ENCODE measurements at regions of chr11 and their contacts with region 1.

Region 1: DNA sequence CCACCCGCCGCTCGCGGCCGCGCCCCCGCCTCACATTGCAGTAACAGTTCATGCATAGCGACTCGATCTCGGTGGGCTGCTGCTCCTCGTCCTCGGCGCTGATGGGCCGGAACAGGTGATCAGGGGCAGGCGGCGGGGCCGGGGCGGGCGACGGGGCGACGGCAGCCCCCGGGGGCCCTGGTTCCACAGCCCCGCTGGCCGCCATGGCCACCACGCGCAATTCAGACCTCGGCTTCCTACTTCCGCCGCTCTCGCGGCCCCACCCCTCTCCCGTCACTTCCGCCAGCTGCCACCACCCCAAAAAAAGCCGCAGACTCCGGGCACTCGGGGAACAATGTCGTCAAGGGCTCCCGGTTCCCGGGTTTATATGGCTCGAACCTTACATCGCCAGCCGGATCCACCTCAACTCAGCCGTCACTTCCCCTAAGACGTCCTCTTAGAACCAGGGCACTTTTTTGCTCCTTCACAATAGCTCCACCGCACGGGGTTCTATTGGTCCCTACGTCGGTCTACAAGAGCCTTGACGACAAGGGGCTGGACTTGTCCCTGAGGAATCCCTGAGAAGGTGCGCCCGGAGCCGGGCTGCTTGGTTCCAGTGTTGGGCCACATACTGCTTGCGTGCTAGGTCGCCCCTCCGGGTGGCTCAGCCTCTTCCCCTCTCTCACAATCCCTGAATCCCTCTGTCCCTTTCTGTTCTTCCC is at the start of gene ZPR1:
- DNase-seq: no peak
- H3K4me3 ChIP-seq: peak within 1 kb of the TSS; percentile 77
- CTCF ChIP-seq: no peak

Region 2: GRCh38 chr11:116314006-116314405 is 473.9 kb before region 1 on chr11:
- CTCF ChIA-PET with region 1: no interaction called
- POLR2A ChIA-PET with region 1: no interaction called
- DNase-seq: no peak
- H3K4me3 ChIP-seq: no peak overlapping the region
- CTCF ChIP-seq: no peak

Region 3: DNA sequence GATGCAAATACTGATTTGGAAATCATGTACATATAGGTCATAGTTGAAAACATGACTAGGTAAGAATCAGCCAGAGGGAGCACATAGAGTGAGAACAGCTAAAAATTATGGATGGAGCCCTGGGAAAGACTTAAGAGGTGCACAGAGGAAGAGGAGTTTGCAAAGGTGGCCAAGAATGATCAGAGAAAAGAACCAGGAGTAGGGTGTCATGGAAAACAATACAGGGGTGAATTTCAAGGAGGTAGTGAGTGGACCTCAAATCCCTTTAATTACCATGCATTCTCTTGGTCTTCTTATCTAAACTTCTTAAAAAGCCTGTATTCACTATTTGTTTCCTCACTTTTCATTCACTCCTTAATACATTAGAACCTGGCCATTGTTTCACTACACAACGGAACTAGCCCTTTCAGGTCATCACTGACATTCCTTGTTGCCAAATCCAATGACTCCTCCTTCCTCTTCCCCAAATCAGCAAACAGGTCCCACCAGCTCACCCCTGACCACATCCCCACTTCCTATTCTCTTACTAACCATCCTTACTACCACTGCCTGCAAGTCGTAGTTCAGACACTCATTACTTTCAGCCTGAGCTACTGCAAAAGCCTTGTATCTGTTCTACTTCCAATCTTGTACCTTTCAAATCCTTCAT is 37.7 kb before region 1 on chr11:
- CTCF ChIA-PET with region 1: interaction called, 11 read pairs
- POLR2A ChIA-PET with region 1: no interaction called
- DNase-seq: no peak
- H3K4me3 ChIP-seq: no peak overlapping the region
- CTCF ChIP-seq: no peak

Region 4: DNA sequence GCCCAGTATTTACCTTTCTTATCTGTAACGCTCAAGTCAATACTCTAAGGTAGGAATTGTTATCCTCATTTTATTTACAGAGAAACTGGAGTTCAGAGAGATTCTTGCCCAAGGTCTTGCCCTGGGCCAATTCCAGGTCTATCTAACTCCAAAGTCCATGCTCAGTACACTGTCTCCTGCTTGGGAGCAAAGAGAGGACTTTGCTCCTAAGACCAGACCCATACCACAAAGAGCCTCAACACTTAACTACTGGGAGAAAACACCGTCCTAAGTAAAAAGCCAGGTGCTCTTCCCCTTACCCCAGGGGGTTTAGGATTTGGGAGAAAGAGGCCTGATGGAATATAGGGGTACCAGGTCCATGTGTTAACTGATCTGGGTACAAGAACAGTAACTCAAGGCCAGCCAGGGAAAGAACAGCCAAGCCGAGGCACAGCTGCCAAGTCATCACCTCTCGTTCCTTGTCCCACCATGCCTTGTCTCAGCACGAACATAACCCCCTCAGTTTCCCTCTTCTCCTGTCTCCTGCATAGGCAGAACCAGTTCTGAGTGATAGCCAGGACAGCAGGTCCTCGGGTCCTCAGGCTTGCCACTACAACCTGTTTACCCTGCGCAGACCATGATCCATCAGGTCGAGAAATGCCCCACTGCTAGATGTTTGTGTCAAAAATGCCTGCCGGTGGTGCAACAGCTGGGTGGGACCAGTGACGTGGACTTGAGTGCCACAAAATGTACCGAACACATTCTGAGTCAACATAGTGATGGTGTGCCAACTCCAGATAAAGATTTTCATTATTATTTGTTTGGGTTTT is 20.7 kb after region 1 on chr11:
- CTCF ChIA-PET with region 1: interaction called, 25 read pairs
- POLR2A ChIA-PET with region 1: no interaction called
- DNase-seq: no peak
- H3K4me3 ChIP-seq: no peak overlapping the region
- CTCF ChIP-seq: no peak

Region 5: GRCh38 chr11:116835791-116836631 is 48.1 kb after region 1 on chr11:
- CTCF ChIA-PET with region 1: interaction called, 120 read pairs
- POLR2A ChIA-PET with region 1: interaction called, 8 read pairs
- DNase-seq: peak; percentile 55
- H3K4me3 ChIP-seq: peak overlapping the region; percentile 45
- CTCF ChIP-seq: peak; percentile 72

Region 6: DNA sequence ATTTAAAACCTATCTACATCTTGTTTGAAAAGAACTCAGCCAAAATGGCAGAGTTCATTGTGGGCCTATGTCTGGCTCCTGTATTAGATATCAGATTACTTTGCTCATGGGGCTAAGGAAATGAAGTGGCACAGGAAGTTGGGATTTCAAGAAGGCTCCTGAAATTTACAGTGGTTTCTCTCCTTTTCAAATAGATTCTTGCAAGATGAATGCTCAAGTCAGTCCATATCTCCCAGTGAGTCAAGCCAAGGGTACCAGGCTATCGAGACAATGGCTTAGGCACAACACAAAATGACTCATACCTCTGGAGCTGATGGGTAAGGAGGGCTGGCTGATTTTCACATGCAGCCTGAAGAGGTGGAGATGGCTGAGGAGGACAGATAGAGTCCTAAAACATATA is 73.6 kb after region 1 on chr11:
- CTCF ChIA-PET with region 1: interaction called, 34 read pairs
- POLR2A ChIA-PET with region 1: no interaction called
- DNase-seq: no peak
- H3K4me3 ChIP-seq: no peak overlapping the region
- CTCF ChIP-seq: no peak

Region 7: GRCh38 chr11:117121176-117121575 is 333.2 kb after region 1 on chr11:
- CTCF ChIA-PET with region 1: interaction called, 13 read pairs
- POLR2A ChIA-PET with region 1: no interaction called
- DNase-seq: no peak
- H3K4me3 ChIP-seq: no peak overlapping the region
- CTCF ChIP-seq: no peak

Measured in AG04449 (cell line).